ENCODE measurements at regions of chr13 and their contacts with region 1.

Region 1: DNA sequence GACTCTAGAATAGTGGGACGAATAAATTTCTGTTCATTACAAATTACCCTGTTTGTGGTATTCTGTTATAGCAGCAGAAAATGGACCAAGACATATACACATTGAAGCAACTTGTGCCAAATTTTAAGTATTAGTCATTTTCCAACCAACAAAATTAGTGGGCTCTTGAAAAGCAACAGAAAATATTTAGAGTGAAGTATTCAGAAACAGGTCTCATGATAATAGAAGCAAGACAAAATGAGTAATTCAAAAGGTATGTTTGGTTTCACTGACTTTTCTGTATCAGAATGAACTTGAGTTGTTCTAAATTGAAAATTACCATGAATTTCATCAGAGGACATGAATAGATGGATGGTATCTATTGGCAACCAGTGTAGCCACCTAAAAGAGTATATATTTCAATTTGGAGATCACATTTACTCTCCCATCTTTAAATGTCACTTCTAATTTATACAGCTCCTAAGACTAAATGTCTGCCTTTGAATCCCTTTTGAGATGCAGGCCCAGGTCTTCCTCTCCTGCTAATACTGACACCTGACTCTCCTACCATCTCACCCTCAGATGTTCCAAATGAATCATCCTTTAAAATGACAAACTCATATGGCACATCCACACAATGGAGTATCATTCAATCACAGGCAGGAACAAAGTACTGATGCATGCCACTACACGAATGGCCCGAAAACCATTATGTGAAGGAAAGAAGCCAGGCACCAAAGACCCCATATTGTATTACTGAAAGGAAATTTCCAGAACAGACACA is 40.7 kb upstream of the DOCK9 start:
- DNase-seq: peak; percentile 59
- H3K4me3 ChIP-seq: no peak overlapping the region
- H3K27ac ChIP-seq: peak overlapping the region; percentile 22
- H3K4me1 ChIP-seq: peaks cover 21% of the 10 kb centered on the region
- H3K27me3 ChIP-seq: no peaks in the 10 kb centered on the region
- CTCF ChIP-seq: no peak

Region 2: GRCh38 chr13:98853771-98854221 is 164.8 kb before region 1 on chr13:
- CTCF ChIA-PET with region 1: no interaction called
- dilution Hi-C with region 1: no loop called
- in situ Hi-C with region 1: no loop called
- intact Hi-C with region 1: no loop called
- DNase-seq: peak; percentile 43
- H3K4me3 ChIP-seq: no peak overlapping the region
- H3K27ac ChIP-seq: no peak overlapping the region
- H3K4me1 ChIP-seq: no peaks in the 10 kb centered on the region
- H3K27me3 ChIP-seq: no peaks in the 10 kb centered on the region
- CTCF ChIP-seq: no peak

Region 3: GRCh38 chr13:98998831-98999638 is 19.6 kb before region 1 on chr13:
- CTCF ChIA-PET with region 1: no interaction called
- dilution Hi-C with region 1: no loop called
- in situ Hi-C with region 1: no loop called
- intact Hi-C with region 1: loop called (anchors 2 kb)
- DNase-seq: no peak
- H3K4me3 ChIP-seq: no peak overlapping the region
- H3K27ac ChIP-seq: no peak overlapping the region
- H3K4me1 ChIP-seq: peaks cover 23% of the 10 kb centered on the region
- H3K27me3 ChIP-seq: no peaks in the 10 kb centered on the region
- CTCF ChIP-seq: no peak